Aorta (tissue), 5 donors: ENCODE measurements at regions of chr2 and their contacts with region 1.

Region 1: GRCh38 chr2:210997373-210997772 is 441.0 kb downstream of the CPS1 start:
- DNase-seq: no peak
- ATAC-seq: peak; percentile 7
- H3K4me3 ChIP-seq: no peak overlapping the region
- H3K27ac ChIP-seq: no peak overlapping the region
- H3K4me1 ChIP-seq: peaks cover 0 to 1% of the 10 kb centered on the region in 2 donors
- H3K27me3 ChIP-seq: no peaks in the 10 kb centered on the region

Region 2: GRCh38 chr2:210859314-210859713 is 138.1 kb before region 1 on chr2:
- intact Hi-C with region 1: loop called in 1 of 2 experiments (anchors 10 kb)
- DNase-seq: no peak
- ATAC-seq: no peak
- H3K4me3 ChIP-seq: no peak overlapping the region
- H3K27ac ChIP-seq: no peak overlapping the region
- H3K4me1 ChIP-seq: peaks cover 0 to 2% of the 10 kb centered on the region in 2 donors
- H3K27me3 ChIP-seq: no peaks in the 10 kb centered on the region